ENCODE measurements at regions of chrX and their contacts with region 1.

Region 1: GRCh38 chrX:46573331-46573891 is at the start of gene CHST7:
- DNase-seq: peak; percentile 49 to 74
- ATAC-seq: peak; percentile 63 to 76 (median 72)
- H3K4me3 ChIP-seq: peak within 1 kb of the TSS; percentile 66
- H3K4me3 Mint-ChIP-seq: peak within 1 kb of the TSS; percentile 86
- H3K27ac ChIP-seq: peak within 1 kb of the TSS; percentile 70
- H3K27ac Mint-ChIP-seq: peak within 1 kb of the TSS; percentile 35 to 95
- H3K4me1 ChIP-seq: peaks cover 31% of the 10 kb centered on the region
- H3K4me1 Mint-ChIP-seq: peaks cover 20 to 32% of the 10 kb centered on the region in 2 donors
- H3K27me3 ChIP-seq: no peaks in the 10 kb centered on the region
- H3K27me3 Mint-ChIP-seq: no peaks in the 10 kb centered on the region
- CTCF ChIP-seq: no peak
- total RNA-seq, gene CHST7: 8.7 to 15.9 (median 11.8) TPM

Region 2: DNA sequence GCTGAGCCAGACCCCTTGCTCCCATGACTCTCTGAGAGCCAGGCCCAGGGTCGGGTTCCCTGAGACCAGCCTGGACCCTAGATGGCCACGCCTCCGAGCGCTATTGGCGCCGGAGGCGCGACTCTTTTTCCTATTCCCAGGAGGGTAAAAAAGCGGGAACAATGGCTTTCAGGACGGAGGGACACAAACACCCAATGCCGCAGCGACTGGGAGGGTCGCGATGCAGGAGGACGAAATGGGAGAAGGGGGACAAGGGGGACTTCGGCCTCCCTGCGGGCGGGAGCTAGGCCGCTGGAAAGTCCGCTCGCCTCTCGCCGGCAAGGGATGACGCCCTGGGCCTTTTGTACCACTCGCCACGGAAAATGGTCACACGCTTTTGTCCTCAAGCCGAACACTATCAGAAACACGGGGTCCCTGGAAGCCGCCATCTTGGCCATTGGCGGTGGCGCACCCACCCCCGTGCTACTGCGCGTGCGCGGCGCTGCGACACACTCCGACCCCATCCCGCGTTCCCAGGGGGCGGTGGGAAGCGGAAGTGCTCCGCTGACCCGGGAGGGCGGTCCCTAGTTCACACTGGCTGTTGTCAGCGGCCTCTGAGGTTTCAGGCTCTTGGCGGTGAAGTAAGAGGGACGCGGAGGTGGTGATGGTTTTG is 126.6 kb before region 1 on chrX:
- intact Hi-C with region 1: loop called (anchors 1 kb)
- DNase-seq: peak; percentile 80 to 91
- ATAC-seq: peak; percentile 84 to 93 (median 92)
- H3K4me3 ChIP-seq: peak overlapping the region; percentile 69
- H3K4me3 Mint-ChIP-seq: peak overlapping the region; percentile 80
- H3K27ac ChIP-seq: peak overlapping the region; percentile 95
- H3K27ac Mint-ChIP-seq: peak overlapping the region; percentile 87 to 91
- H3K4me1 ChIP-seq: peaks cover 18% of the 10 kb centered on the region
- H3K4me1 Mint-ChIP-seq: peaks cover 0 to 5% of the 10 kb centered on the region in 2 donors
- H3K27me3 ChIP-seq: no peaks in the 10 kb centered on the region
- H3K27me3 Mint-ChIP-seq: no peaks in the 10 kb centered on the region
- CTCF ChIP-seq: no peak

Region 3: GRCh38 chrX:46637937-46638336 is 64.5 kb after region 1 on chrX:
- intact Hi-C with region 1: loop called (anchors 5 kb)
- DNase-seq: no peak
- ATAC-seq: peak in 1 of 3 donors; percentile 38
- H3K4me3 ChIP-seq: no peak overlapping the region
- H3K4me3 Mint-ChIP-seq: no peak overlapping the region
- H3K27ac ChIP-seq: no peak overlapping the region
- H3K27ac Mint-ChIP-seq: no peak overlapping the region
- H3K4me1 ChIP-seq: peaks cover 14% of the 10 kb centered on the region
- H3K4me1 Mint-ChIP-seq: peaks cover 25 to 30% of the 10 kb centered on the region in 2 donors
- H3K27me3 ChIP-seq: no peaks in the 10 kb centered on the region
- H3K27me3 Mint-ChIP-seq: peaks cover 3 to 50% of the 10 kb centered on the region in 2 donors
- CTCF ChIP-seq: no peak